ENCODE measurements at regions of chr20 and their contacts with region 1.

Region 1: DNA sequence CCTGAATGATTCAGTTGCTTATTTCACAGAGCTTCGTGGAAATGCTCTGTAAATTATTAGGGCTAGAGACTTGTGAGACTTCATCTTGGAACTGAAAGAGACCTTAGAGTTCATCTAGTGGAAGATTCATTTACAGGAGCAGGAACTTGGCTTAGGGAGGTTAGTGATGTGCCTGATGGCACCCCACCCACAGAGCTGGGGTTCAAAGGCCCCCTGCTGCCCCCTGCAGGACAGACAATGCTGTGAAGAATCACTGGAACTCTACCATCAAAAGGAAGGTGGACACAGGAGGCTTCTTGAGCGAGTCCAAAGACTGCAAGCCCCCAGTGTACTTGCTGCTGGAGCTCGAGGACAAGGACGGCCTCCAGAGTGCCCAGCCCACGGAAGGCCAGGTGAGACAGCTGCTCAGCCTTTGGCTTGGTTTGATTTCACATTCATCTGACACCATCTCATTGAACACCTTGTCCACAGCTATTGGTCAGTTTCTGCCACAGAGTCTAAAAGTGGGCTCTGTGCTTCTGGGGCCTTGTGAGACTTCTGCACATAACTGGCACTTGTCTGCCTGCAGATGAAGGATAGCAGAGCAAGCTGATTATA is 25.1 kb downstream of the MYBL2 start:
- DNase-seq: peak; percentile 79
- H3K4me3 ChIP-seq: no peak overlapping the region
- H3K27ac ChIP-seq: no peak overlapping the region
- H3K4me1 ChIP-seq: no peaks in the 10 kb centered on the region
- H3K27me3 ChIP-seq: no peaks in the 10 kb centered on the region
- CTCF ChIP-seq: peak; percentile 30 to 61 (median 57)
- EP300 ChIP-seq: no peak
- POLR2A ChIP-seq: no peak

Region 2: DNA sequence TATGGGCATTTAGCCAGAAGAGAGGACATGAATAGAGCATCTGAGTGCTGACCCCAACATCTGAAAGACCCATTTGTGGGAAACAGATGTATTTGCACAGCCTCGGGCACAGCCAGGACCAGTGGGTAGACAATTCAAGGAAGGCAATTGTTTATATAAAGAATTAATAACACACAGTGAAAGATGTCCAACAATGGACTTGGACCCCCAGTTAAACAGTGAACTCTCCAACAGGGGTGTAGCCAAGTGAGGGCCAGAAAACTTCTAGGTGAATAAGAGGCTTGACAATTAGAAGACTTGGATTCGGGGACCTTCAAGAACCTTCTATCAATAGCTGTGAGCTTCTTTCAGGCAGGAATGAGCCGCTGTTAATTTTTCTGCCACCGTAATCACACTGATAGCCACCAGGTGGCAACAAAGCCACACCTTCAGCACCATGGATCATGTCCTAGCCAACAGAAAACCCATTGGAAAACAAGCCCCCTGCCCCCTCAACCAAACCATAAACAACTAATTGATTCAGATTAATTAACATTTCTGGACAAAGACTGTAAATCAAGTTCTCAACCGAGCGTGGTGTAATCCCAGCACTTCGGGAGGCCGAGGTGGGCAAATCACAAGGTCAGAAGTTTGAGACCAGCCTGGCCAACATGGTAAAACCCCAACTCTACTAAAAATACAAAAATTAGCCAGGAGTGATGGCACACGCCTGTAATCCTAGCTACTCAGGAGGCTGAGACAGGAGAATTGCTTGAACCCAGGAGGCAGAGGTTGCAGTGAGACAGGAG is 243.1 kb before region 1 on chr20:
- in situ Hi-C with region 1: loop called in 2 of 4 experiments (anchors 10 to 25 kb)
- intact Hi-C with region 1: no loop called
- DNase-seq: peak; percentile 30
- H3K4me3 ChIP-seq: no peak overlapping the region
- H3K27ac ChIP-seq: no peak overlapping the region
- H3K4me1 ChIP-seq: no peaks in the 10 kb centered on the region
- H3K27me3 ChIP-seq: peaks cover 12% of the 10 kb centered on the region
- CTCF ChIP-seq: peak; percentile 53 to 72 (median 68)
- EP300 ChIP-seq: no peak
- POLR2A ChIP-seq: no peak